Motor neuron (in vitro differentiated cells): ENCODE measurements at regions of chr3 and their contacts with region 1.

Region 1: GRCh38 chr3:37855363-37855970 is 6.2 kb upstream of the CTDSPL start:
- ATAC-seq: peak in 6 of 8 experiments; percentile 3 to 57 (median 33)
- H3K4me3 ChIP-seq: no peak overlapping the region
- H3K27ac ChIP-seq: no peak overlapping the region
- H3K4me1 ChIP-seq: peaks cover 8% of the 10 kb centered on the region in 2 donors

Region 2: DNA sequence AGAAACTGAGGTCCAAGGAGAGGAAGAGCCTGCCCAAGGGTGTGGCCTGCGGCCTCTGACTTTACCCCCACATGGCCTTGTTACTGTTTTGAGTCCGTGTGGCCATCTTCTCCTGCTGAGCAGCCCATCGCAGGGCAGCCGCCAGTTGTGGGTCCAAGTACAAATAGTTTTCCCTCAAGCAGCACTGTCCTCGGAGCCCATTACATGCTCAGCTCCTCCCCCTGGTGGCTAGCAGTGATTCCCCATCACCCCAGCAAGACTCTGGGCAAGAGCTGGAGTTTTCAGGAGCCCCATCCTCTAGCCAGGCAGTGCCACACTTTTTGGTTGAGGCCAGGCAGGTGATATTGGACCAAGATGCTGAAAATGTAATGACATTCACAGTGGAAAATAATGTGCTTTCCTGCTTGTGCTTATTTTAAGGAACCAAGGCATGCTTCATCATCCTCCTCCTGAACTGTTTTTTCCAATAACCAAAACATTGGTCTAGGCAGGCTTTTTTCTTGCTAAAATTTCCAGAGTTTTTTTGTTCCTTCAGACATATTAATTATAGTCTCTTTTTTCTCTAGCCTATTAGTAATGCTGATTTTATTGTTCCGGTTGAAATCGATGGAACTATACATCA is 111.9 kb after region 1 on chr3:
- in situ Hi-C with region 1: loop called in 3 of 9 experiments (anchors 10 kb)
- ATAC-seq: peak in 7 of 8 experiments; percentile 30 to 86 (median 67)
- H3K4me3 ChIP-seq: no peak overlapping the region
- H3K27ac ChIP-seq: no peak overlapping the region
- H3K4me1 ChIP-seq: peaks cover 3 to 5% of the 10 kb centered on the region in 2 donors

Region 3: DNA sequence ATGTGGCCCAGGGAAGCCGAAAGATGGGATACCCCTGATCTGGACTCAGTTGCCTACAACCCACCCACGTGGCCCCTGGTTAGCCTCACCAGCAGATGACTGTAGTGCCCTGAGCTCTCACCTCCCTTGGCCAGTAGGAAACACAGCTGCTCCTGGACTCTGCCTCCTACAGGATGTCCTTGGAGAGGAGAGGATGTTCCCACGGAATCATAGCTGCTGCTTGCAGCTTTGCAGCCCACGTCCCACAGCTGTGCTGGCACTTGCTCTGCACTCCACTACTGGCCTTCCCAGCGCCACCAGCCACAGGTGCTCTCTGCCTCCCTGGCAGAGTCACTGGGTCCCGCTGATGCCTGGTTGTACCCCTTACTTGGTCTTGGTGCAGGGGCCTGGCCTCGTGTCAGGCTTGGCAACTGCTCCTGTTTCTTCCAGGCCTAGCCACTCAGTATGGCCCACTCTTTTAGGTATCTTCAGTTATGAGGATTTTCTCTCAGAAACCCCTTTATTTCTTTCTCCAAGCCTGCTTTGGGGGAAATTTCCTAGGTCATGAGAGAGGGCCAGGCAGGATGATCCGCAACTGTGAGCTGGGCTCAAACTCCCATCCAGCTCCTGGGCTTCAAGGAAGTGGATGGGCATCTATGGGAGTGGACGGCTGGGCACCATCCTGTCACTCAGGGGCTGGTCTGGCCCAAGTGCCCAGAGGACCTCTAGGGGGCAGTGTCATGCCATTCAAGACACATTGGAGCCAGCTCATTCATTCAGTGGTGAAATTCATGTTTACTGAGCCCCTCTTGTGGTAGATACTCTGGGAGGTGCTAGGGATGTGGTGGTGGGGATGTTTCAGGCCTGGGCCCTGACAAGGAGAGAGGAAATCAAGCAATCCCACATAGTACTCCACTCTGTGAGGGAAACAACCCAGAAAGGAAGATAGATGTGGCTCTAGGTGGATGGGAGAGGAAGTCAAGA is 118.9 kb after region 1 on chr3:
- in situ Hi-C with region 1: loop called in 3 of 9 experiments (anchors 10 kb)
- ATAC-seq: peak; percentile 62 to 96 (median 86)
- H3K4me3 ChIP-seq: no peak overlapping the region
- H3K27ac ChIP-seq: no peak overlapping the region
- H3K4me1 ChIP-seq: no peaks in the 10 kb centered on the region